ENCODE measurements at regions of chr7 and their contacts with region 1.

Region 1: DNA sequence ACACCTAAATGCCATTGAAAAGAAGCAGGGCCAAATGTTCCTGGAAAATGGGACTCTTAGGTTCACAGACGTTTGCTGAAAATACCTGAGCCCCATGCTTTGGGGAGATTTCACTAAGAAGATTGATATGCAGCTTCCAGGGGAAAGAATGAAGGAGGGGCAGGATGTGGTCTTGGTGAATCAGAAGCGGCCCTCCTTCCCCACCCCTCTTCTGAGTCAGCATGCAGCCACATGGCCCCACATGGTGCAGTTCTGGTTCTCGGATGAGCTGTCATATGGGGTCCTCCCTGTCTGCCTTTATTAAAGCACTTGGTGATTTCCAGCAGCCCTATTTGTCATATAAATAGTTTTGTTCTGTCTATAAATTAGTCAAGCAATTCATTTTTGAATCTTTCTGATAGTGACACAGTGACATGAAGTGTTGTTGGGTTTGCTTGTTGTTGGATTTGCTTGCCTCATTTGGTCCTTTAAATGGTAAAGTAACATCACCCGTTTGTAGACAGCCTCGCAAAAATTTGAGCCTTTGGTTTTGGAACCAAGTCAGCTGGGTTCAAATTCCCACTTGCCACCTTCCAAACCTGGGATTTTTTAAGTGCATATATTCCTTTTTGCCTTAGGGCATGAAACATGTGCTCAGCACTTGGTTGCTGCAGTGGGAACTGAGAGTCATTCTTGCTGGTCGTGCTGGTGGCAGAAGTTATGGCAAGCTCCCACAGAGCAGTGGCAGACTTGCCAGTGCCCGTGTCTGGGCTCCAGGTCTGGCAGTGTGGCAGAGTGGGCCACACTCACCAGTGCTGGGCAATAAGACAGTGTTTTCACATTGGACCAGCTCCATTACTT is 68.1 kb upstream of the CDK6 start:
- DNase-seq: peak; percentile 96
- H3K4me3 Mint-ChIP-seq: peak overlapping the region; percentile 18
- H3K27ac Mint-ChIP-seq: peak overlapping the region; percentile 84
- H3K4me1 Mint-ChIP-seq: peaks cover 26% of the 10 kb centered on the region
- H3K27me3 Mint-ChIP-seq: peaks cover 5% of the 10 kb centered on the region

Region 2: GRCh38 chr7:91940572-91941341 is 963.8 kb before region 1 on chr7 and contains the start of gene AKAP9:
- CTCF ChIA-PET with region 1: no interaction called
- intact Hi-C with region 1: loop called (anchors 1 kb)
- DNase-seq: peak; percentile 91
- H3K4me3 Mint-ChIP-seq: peak within 1 kb of the TSS; percentile 90
- H3K27ac Mint-ChIP-seq: peak within 1 kb of the TSS; percentile 94
- H3K4me1 Mint-ChIP-seq: peaks cover 29% of the 10 kb centered on the region
- H3K27me3 Mint-ChIP-seq: no peaks in the 10 kb centered on the region
- total RNA-seq, gene AKAP9: 20.0 to 26.2 TPM

Region 3: GRCh38 chr7:92648067-92648466 is 256.4 kb before region 1 on chr7:
- CTCF ChIA-PET with region 1: no interaction called
- intact Hi-C with region 1: loop called (anchors 1 kb)
- DNase-seq: no peak
- H3K4me3 Mint-ChIP-seq: no peak overlapping the region
- H3K27ac Mint-ChIP-seq: peak overlapping the region; percentile 88
- H3K4me1 Mint-ChIP-seq: peaks cover 89% of the 10 kb centered on the region
- H3K27me3 Mint-ChIP-seq: no peaks in the 10 kb centered on the region

Region 4: DNA sequence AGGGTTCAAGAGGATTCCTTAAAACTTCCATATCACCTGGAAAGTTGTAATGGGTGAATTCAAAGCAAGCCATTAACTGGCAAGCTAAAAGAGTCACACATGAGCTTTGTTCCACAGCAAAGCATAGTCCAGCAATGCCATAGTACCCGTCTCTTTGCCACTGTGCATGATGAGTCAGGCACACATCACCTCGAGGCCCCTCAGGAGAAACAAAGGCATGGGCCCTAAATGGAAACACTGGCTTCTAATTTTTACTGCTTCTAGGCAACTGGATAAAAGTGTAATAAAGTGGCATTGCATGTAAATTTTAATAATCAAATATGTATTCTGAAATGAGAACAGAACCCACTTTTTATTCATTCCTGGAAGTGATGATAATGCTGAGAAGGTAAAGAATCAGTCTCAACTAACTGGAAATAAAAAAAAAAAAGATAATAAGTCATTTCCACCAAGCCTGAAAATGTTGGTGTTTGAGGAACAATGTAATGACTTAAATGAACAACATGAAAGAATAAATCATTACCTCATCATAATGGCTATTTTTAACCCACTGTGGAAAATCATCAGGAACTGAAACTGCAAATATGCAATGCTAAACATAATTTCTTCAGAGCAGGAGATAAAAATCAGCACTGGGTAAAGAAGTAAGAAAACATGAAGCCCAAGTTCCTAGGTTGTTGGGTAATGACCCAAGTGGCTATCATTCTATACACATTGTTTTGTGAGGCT is 173.0 kb before region 1 on chr7:
- CTCF ChIA-PET with region 1: interaction called, 4 read pairs
- intact Hi-C with region 1: loop called (anchors 1 kb)
- DNase-seq: peak; percentile 66
- H3K4me3 Mint-ChIP-seq: peak overlapping the region; percentile 9
- H3K27ac Mint-ChIP-seq: peak overlapping the region; percentile 95
- H3K4me1 Mint-ChIP-seq: peaks cover 64% of the 10 kb centered on the region
- H3K27me3 Mint-ChIP-seq: no peaks in the 10 kb centered on the region

Region 5: GRCh38 chr7:92880212-92881090 is 24.1 kb before region 1 on chr7:
- CTCF ChIA-PET with region 1: no interaction called
- intact Hi-C with region 1: loop called (anchors 1 kb)
- DNase-seq: peak; percentile 43
- H3K4me3 Mint-ChIP-seq: no peak overlapping the region
- H3K27ac Mint-ChIP-seq: no peak overlapping the region
- H3K4me1 Mint-ChIP-seq: peaks cover 34% of the 10 kb centered on the region
- H3K27me3 Mint-ChIP-seq: peaks cover 9% of the 10 kb centered on the region

Region 6: GRCh38 chr7:93036807-93037206 is 132.3 kb after region 1 on chr7:
- CTCF ChIA-PET with region 1: interaction called, 5 read pairs
- intact Hi-C with region 1: loop called (anchors 1 kb)
- DNase-seq: peak; percentile 74
- H3K4me3 Mint-ChIP-seq: no peak overlapping the region
- H3K27ac Mint-ChIP-seq: peak overlapping the region; percentile 59
- H3K4me1 Mint-ChIP-seq: peaks cover 22% of the 10 kb centered on the region
- H3K27me3 Mint-ChIP-seq: no peaks in the 10 kb centered on the region

Region 7: GRCh38 chr7:93097388-93097787 is 192.9 kb after region 1 on chr7:
- CTCF ChIA-PET with region 1: no interaction called
- intact Hi-C with region 1: no loop called
- DNase-seq: no peak
- H3K4me3 Mint-ChIP-seq: no peak overlapping the region
- H3K27ac Mint-ChIP-seq: no peak overlapping the region
- H3K4me1 Mint-ChIP-seq: no peaks in the 10 kb centered on the region
- H3K27me3 Mint-ChIP-seq: no peaks in the 10 kb centered on the region